Ascending aorta (tissue), 2 donors: ENCODE measurements at regions of chr10 and their contacts with region 1.

Region 1: DNA sequence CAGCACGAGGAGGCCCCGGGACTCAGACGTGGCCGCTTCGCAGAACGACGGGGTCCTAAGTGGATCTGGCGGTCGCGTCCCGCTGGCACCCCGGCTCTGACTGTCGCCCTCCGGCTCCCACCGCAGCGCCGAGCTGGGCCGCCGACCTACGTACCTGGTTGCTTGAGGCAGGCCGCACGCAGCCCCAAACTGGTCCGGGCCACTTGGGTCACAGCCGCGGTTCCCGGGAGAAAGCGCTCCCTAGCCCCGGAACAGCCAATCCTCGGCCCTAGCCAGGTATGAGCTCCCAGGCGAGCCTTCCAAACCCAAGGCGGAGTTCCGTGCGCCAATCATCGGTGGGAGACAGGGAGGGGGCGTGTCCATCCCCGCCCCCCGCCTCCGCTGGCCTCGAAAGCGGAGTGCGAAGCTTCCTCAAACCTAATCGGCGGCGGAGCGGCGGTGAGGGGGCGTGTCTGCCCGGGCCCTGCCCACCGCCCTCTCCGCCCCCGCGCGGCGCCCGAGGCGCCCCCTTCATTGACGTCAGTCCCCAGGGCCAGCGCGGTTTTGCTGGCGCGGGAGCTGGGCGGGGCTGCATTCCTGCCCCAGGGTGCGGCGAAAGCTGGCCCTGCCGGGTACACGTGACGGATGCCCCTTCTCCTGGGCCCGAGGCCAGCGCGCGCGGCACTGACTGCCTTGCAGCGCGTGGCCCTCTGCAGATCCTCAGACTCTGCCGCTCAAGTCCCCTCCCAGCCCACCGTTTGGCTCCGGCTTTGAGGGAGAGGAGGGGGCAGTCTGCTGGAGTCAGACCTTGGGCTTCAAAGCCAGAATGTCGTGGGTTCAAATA is at the start of gene AVPI1:
- DNase-seq: peak; percentile 93 to 99
- H3K4me3 ChIP-seq: peak within 1 kb of the TSS; percentile 75 to 93
- H3K27ac ChIP-seq: peak within 1 kb of the TSS; percentile 92 to 94
- H3K4me1 ChIP-seq: peaks cover 10 to 45% of the 10 kb centered on the region in 2 donors
- H3K27me3 ChIP-seq: no peaks in the 10 kb centered on the region
- CTCF ChIP-seq: no peak
- total RNA-seq, gene AVPI1: 23.7 TPM

Region 2: DNA sequence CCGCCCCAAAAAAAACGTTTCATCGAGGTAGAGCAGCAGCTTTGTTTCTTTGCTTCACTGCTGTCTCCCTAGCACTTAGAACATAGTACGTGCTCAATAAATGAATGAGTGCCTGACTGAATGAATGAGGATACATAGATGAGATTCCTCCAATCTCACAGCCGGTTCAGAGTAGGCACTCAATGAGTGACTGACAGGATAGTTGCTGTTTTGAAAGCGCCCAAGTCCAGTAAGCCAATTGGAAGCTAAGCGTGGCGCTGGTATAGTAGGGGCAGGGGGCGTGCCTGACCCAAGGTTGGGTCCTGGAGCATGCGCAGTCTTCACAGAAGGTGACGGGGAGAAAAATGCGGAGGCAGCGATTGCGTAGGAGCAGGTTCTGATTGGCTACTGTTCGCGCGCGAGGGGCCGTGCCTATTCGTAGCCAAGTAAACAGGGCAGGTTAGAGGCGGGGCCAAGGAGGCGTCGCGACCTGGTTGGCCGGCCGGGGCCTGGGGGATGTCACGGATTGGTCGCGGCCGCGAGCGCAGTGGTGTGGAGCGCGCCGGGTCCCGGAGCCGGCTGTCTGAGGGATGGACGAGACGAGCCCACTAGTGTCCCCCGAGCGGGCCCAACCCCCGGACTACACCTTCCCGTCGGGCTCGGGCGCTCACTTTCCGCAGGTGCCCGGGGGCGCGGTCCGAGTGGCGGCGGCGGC is 46.9 kb before region 1 on chr10 and contains the start of gene PI4K2A:
- intact Hi-C with region 1: loop called (anchors 2 kb)
- DNase-seq: peak; percentile 97 to 99
- H3K4me3 ChIP-seq: peak within 1 kb of the TSS; percentile 87 to 96
- H3K27ac ChIP-seq: peak within 1 kb of the TSS; percentile 80 to 93
- H3K4me1 ChIP-seq: peaks cover 0 to 13% of the 10 kb centered on the region in 2 donors
- H3K27me3 ChIP-seq: no peaks in the 10 kb centered on the region
- CTCF ChIP-seq: no peak
- total RNA-seq, gene PI4K2A: 33.7 TPM

Region 3: GRCh38 chr10:97651773-97652172 is 35.4 kb before region 1 on chr10:
- intact Hi-C with region 1: no loop called
- DNase-seq: no peak
- H3K4me3 ChIP-seq: no peak overlapping the region
- H3K27ac ChIP-seq: no peak overlapping the region
- H3K4me1 ChIP-seq: no peaks in the 10 kb centered on the region
- H3K27me3 ChIP-seq: no peaks in the 10 kb centered on the region
- CTCF ChIP-seq: no peak

Region 4: DNA sequence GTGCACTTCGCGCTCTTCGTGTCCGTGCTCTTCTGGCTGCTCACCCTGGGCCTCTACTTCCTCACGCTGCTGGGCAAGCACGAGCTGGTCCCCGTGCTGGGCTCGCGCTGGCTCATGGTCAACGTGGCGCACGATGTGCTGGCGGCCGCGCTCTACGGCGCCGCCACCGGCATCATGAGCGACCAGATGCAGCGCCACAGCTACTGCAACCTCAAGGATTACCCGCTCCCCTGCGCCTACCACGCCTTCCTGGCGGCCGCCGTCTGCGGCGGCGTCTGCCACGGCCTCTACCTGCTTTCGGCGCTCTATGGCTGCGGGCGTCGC is 26.8 kb after region 1 on chr10:
- intact Hi-C with region 1: loop called (anchors 1 kb)
- DNase-seq: peak; percentile 47 to 82
- H3K4me3 ChIP-seq: peak overlapping the region; percentile 67 to 78
- H3K27ac ChIP-seq: peak overlapping the region; percentile 98 to 100
- H3K4me1 ChIP-seq: peaks cover 35 to 60% of the 10 kb centered on the region in 2 donors
- H3K27me3 ChIP-seq: no peaks in the 10 kb centered on the region
- CTCF ChIP-seq: peak in 1 of 3 experiments; percentile 18

Region 5: GRCh38 chr10:97736902-97737769 is 50.0 kb after region 1 on chr10 and contains the start of gene ZFYVE27:
- intact Hi-C with region 1: loop called (anchors 2 kb)
- DNase-seq: peak; percentile 79 to 97
- H3K4me3 ChIP-seq: peak within 1 kb of the TSS; percentile 100
- H3K27ac ChIP-seq: peak within 1 kb of the TSS; percentile 97
- H3K4me1 ChIP-seq: peaks cover 2 to 20% of the 10 kb centered on the region in 2 donors
- H3K27me3 ChIP-seq: no peaks in the 10 kb centered on the region
- CTCF ChIP-seq: no peak
- total RNA-seq, gene ZFYVE27: 62.2 TPM